Activated CD8-positive, alpha-beta memory T cell treated with anti-CD3 and anti-CD28 coated beads, Interleukin-2, amount 10 ng/mL, durations not matched to agents 7 days and 5 days (primary cell): ENCODE measurements at regions of chr5 and their contacts with region 1.

Region 1: GRCh38 chr5:137660349-137660817 is 75.5 kb downstream of the KLHL3 start:
- DNase-seq: peak; percentile 81
- ATAC-seq: peak; percentile 89
- H3K4me3 Mint-ChIP-seq: no peak overlapping the region
- H3K27ac Mint-ChIP-seq: no peak overlapping the region
- H3K4me1 Mint-ChIP-seq: peaks cover 5% of the 10 kb centered on the region
- H3K27me3 Mint-ChIP-seq: no peaks in the 10 kb centered on the region

Region 2: DNA sequence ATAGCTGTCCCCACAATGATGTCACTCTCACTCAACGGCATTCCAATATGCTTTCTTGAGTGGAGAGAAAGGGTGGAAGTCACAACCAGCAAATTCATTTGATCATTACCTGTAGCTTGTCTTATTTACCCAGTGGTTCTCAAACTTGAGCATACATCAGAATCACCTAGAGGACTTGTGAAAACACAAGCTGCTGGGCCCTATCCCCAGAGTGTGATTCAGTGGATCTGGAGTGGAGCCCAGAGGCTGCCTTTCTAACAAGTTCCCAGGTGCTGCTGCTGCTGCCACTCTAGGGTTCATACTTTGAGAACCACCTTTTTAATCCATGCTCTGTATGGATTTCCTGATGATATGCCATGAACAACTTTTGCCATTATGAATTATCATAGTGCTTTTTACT is 19.2 kb before region 1 on chr5:
- CTCF ChIA-PET with region 1: interaction called, 10 read pairs
- DNase-seq: no peak
- ATAC-seq: no peak
- H3K4me3 Mint-ChIP-seq: no peak overlapping the region
- H3K27ac Mint-ChIP-seq: no peak overlapping the region
- H3K4me1 Mint-ChIP-seq: no peaks in the 10 kb centered on the region
- H3K27me3 Mint-ChIP-seq: no peaks in the 10 kb centered on the region

Region 3: DNA sequence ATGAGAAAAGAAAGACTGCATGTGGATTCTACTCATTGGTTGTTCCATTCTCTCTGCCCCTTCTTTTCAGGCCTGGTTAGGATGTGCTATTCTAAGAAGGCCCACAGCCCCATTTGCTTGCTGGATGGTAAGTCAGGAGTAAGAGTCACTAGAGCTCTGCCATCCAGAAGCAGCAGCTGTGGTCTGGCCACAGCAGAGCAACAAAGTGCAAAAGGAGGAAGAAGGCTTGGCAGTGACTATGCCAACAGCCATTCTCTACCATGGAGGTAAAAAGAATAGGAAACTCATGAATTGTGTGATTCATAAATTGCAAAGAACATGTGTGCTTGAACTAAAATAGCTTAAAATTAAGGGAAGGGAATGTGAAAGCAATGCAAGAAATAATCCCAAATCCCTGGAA is 54.6 kb after region 1 on chr5:
- CTCF ChIA-PET with region 1: interaction called, 11 read pairs
- DNase-seq: no peak
- ATAC-seq: no peak
- H3K4me3 Mint-ChIP-seq: no peak overlapping the region
- H3K27ac Mint-ChIP-seq: no peak overlapping the region
- H3K4me1 Mint-ChIP-seq: no peaks in the 10 kb centered on the region
- H3K27me3 Mint-ChIP-seq: no peaks in the 10 kb centered on the region

Region 4: DNA sequence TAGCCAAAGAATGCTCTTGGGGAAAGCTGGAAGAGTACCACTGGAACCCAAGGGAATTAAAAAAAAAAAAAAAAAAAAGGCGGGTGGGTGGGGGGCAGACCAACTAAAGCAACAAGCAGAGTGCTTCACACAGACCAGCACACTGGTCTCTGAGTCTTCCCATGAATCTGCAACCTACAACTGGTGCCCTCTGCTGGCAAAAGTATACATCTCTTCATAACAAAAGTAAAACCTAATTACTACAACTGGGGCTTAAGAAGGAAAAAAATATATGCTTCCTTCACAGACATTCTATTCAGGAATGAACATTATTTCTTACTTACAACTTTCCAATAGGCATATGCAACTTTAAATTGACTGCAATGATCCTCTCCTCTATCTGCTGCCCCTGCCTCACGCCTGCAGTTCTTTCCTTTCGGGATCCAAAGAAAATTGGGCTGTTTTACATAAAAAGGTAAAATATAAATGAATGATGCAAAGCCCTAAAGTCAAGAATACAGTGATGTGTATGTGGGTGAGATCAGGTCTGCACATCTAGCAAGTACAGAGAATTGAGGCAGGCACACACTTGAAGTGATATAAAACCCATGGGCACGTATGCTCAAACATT is 82.8 kb after region 1 on chr5:
- CTCF ChIA-PET with region 1: interaction called, 163 read pairs
- DNase-seq: peak; percentile 72
- ATAC-seq: peak; percentile 86
- H3K4me3 Mint-ChIP-seq: no peak overlapping the region
- H3K27ac Mint-ChIP-seq: no peak overlapping the region
- H3K4me1 Mint-ChIP-seq: peaks cover 6% of the 10 kb centered on the region
- H3K27me3 Mint-ChIP-seq: no peaks in the 10 kb centered on the region